ENCODE measurements at regions of chr5 and their contacts with region 1.

Region 1: DNA sequence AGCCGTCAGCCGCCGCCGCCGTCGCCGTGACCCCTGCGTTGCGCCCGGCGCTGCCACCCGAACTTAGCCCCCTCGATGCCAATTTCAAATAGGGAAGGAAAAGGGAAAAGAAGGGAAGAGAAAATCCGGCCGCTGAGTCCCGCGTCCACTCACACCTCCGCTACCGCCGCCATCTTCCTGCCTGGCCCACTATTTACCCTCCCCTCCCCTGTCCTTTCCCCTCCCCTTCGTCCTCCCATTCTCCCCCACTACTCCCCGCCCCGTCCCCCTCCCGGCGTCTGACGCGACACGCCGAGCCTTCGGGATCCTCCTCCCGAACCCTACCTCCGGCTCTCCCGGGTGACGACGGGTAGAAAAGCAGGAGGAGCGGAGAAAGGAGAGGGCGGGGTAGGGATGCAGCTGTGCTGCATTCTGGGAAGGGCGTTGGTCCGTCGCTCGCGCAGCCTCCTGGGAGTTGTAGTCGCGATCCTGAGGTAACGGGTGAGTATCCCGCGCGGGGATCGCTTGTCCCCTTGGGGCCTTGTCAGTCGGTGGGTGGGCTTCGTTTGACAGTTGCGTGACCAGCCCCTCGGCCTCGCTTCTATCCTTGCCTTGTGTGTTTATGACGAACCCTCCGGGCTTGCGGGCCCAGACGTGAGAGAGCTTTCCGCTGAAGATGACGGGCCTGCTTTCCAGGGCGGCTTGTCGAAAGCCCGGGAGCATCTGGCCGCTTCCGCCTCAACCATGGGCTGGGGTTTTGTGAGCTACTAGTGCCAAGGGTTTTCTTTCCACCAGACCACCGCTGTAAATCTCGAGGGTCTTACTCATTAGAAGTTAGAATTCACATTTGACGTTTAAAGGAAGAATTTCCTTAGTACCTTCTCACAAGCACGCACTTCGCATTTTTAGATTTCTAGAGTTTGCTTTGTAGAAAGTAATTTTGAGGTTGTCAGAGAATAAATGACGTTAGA is at the starts of genes CERT1 and POLK:
- DNase-seq: peak; percentile 96
- ATAC-seq: peak; percentile 97
- H3K4me3 ChIP-seq: peak within 1 kb of the TSS; percentile 89 to 96 (median 91)
- H3K27ac ChIP-seq: peak within 1 kb of the TSS; percentile 83
- H3K4me1 ChIP-seq: peaks cover 43% of the 10 kb centered on the region
- H3K27me3 ChIP-seq: no peaks in the 10 kb centered on the region; a peak in 1 of 5 replicates
- CTCF ChIP-seq: no peak
- EP300 ChIP-seq: no peak; a peak in 1 of 4 replicates
- POLR2A ChIP-seq: peak; percentile 83 to 91
- RAD21 ChIP-seq: no peak; the same call in 1 of the 2 replicates
- total RNA-seq, gene CERT1: 12.7 and 23.6 TPM in 2 replicates
- total RNA-seq, gene POLK: 11.7 and 17.2 TPM in 2 replicates

Region 2: DNA sequence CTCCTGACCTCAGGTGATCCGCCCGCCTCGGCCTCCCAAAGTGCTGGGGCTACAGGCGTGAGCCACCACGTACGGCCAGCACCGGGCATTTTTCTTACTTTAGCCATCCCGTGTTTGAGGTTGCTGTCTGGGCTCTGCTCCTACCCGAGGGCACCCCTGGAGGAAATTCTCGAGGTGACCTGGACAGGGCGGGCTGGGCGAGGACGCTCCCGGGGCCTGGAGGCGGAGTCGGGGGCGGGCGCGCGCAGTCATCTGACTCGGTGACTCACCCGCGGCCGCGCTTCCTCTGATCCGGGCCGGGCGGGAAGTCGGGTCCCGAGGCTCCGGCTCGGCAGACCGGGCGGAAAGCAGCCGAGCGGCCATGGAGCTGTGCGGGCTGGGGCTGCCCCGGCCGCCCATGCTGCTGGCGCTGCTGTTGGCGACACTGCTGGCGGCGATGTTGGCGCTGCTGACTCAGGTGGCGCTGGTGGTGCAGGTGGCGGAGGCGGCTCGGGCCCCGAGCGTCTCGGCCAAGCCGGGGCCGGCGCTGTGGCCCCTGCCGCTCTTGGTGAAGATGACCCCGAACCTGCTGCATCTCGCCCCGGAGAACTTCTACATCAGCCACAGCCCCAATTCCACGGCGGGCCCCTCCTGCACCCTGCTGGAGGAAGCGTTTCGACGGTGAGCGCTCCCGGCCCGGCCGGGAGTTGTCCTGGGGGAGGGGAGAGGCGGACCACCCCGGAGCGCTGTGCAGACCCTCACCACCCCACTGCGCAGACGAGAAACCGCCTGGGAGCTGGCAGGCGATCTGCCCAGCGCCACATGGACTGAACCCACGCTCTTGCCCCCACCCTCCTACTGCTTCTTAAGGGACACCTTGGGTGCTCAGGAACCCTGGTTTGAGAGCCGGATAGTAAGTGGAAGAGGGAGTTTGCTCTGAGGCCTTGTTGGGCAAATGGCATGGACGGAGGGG is 826.5 kb before region 1 on chr5 and contains the start of gene HEXB:
- CTCF ChIA-PET with region 1: no interaction called
- POLR2A ChIA-PET with region 1: no interaction called
- in situ Hi-C with region 1: loop called (anchors 25 kb)
- intact Hi-C with region 1: no loop called
- DNase-seq: peak; percentile 73
- ATAC-seq: peak; percentile 93
- H3K4me3 ChIP-seq: peak within 1 kb of the TSS; percentile 84 to 92 (median 88)
- H3K27ac ChIP-seq: peak within 1 kb of the TSS; percentile 67
- H3K4me1 ChIP-seq: peaks cover 27% of the 10 kb centered on the region
- H3K27me3 ChIP-seq: no peaks in the 10 kb centered on the region
- CTCF ChIP-seq: 0 out of 2 replicates have a peak, but pooled peaks have one; percentile 12
- EP300 ChIP-seq: no peak
- POLR2A ChIP-seq: peak; percentile 83 to 91
- RAD21 ChIP-seq: 0 out of 2 replicates have a peak, but pooled peaks have one; percentile 31
- total RNA-seq, gene HEXB: 43.7 and 100 TPM in 2 replicates

Region 3: GRCh38 chr5:75482482-75482881 is 29.2 kb before region 1 on chr5:
- CTCF ChIA-PET with region 1: no interaction called
- POLR2A ChIA-PET with region 1: no interaction called
- in situ Hi-C with region 1: no loop called
- intact Hi-C with region 1: no loop called
- DNase-seq: no peak
- ATAC-seq: peak; percentile 43; the same call in 2 of the 3 replicates
- H3K4me3 ChIP-seq: no peak overlapping the region
- H3K27ac ChIP-seq: no peak overlapping the region
- H3K4me1 ChIP-seq: no peaks in the 10 kb centered on the region
- H3K27me3 ChIP-seq: no peaks in the 10 kb centered on the region
- CTCF ChIP-seq: no peak
- EP300 ChIP-seq: no peak
- POLR2A ChIP-seq: no peak
- RAD21 ChIP-seq: no peak

Region 4: DNA sequence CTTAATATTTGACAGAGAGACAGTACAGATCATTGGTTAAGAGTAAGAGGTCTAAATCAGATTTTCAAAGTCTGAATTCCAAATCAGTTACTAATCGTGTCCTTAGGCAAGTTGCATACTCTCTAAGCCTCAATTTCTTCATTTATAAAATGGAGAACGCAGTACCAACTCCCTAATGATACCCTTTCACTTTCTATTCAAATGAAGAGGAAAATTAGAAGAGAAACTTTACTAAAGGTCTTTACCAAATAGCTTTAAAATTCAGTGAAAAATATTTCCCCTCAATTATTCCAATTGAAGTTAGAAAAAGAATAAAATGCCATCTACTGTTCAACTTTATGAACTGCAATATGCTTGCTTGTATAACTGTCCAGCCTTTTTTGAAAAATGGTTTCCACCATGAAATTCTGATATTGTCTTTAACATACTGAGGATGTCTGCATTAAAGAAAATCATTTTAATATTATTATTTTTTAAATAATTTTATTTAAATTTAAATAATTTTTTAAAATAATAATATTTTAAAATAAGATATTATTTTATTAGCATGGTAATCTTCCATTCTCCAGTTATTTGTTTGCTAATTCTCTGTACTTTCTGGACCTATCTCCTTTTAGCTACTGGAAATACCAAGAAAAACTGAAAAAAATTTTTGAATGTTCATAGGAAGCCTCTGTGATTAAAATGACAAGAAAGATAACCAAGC is 169.6 kb after region 1 on chr5:
- CTCF ChIA-PET with region 1: no interaction called
- POLR2A ChIA-PET with region 1: no interaction called
- in situ Hi-C with region 1: no loop called
- intact Hi-C with region 1: loop called (anchors 10 kb)
- DNase-seq: peak; percentile 28
- ATAC-seq: no peak; the same call in 2 of the 3 replicates
- H3K4me3 ChIP-seq: no peak overlapping the region
- H3K27ac ChIP-seq: no peak overlapping the region
- H3K4me1 ChIP-seq: peaks cover 11% of the 10 kb centered on the region
- H3K27me3 ChIP-seq: no peaks in the 10 kb centered on the region
- CTCF ChIP-seq: peak; percentile 46
- EP300 ChIP-seq: no peak
- POLR2A ChIP-seq: no peak
- RAD21 ChIP-seq: 0 out of 2 replicates have a peak, but pooled peaks have one; percentile 25